Adrenal gland (tissue), 19 donors: ENCODE measurements at regions of chr7 and their contacts with region 1.

Region 1: GRCh38 chr7:130486114-130486958 is 5.5 kb upstream of the MEST start:
- DNase-seq: peak; percentile 78 to 86 (median 85)
- H3K4me3 ChIP-seq: peak overlapping the region in 2 of 4 donors; percentile 62 to 70
- H3K27ac ChIP-seq: peak overlapping the region in 4 of 5 donors; percentile 32 to 90 (median 76)
- H3K4me1 ChIP-seq: peaks cover 7 to 43% of the 10 kb centered on the region in 2 donors
- H3K27me3 ChIP-seq: no peaks in the 10 kb centered on the region
- CTCF ChIP-seq: peak; percentile 68 to 85 (median 77)
- POLR2A ChIP-seq: no peak

Region 2: GRCh38 chr7:130069978-130070860 is 416.1 kb before region 1 on chr7 and contains the start of gene KLHDC10:
- intact Hi-C with region 1: loop called in 1 of 2 experiments (anchors 10 kb)
- DNase-seq: peak; percentile 97 to 100 (median 98)
- H3K4me3 ChIP-seq: peak within 1 kb of the TSS; percentile 7 to 95 (median 80)
- H3K27ac ChIP-seq: peak within 1 kb of the TSS; percentile 78 to 93 (median 85)
- H3K4me1 ChIP-seq: peaks cover 28 to 47% of the 10 kb centered on the region in 2 donors
- H3K27me3 ChIP-seq: no peaks in the 10 kb centered on the region
- CTCF ChIP-seq: no peak
- POLR2A ChIP-seq: peak; percentile 35 to 69
- total RNA-seq, gene KLHDC10: 23.9 to 57.2 (median 33.9) TPM

Region 3: DNA sequence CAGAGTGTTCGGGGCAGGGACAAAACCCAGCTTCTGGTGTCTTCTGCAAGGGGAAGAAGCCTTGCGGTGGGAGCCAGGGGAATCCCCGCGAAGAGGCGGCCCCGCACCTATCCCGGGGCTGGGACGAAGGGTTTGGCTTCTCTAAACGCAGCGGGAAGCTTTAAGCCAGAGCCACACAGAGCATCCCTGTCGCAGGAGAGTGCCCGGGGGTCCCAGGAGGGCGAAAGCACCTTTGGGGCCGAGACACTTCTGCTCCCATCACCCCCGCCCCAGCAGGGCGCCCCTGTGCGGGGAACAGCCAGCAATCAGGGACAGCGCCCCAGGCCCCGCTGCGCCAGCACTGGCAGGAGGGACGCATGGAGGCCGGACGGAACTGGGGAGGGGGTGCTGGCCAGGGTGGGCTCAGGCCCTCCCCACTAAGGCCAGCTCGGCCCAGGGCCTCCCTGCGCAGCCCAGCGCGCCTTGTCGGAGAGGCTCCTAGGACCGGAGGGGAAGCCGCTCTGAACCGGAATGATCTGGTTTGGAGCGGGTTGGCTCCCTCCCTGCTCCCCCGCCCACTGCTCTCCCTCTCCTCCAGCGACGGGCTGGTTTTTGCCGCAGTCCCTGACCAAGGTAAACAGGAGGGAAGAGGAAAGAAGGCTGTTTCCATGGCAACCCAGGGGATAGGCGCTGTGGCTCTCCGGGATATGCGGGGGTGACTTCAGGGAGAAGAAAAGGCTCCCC is 345.0 kb before region 1 on chr7:
- intact Hi-C with region 1: no loop called
- DNase-seq: peak; percentile 65 to 87 (median 78)
- H3K4me3 ChIP-seq: peak overlapping the region; percentile 25 to 76 (median 30)
- H3K27ac ChIP-seq: peak overlapping the region in 2 of 5 donors; percentile 82 to 83
- H3K4me1 ChIP-seq: peaks cover 0 to 7% of the 10 kb centered on the region in 2 donors
- H3K27me3 ChIP-seq: no peaks in the 10 kb centered on the region
- CTCF ChIP-seq: no peak
- POLR2A ChIP-seq: no peak

Region 4: DNA sequence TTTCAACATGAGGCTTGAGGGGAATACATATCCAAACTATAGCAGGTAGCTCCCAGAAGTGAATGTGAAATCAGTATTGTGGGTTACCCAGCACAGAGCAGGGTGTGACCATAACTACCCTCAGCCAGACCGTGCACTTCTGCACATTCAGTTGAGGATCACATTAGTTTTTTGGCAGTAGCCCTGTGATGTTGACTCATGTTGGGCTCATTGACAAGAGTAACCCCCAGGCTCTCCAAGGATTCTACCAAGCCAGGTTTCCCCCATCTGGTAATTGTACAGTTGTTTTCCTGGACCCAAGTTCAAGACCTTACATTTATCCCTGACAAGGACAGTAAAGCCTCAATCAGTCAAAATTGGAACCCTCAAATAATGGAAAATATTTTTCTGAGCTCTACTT is 205.1 kb before region 1 on chr7:
- intact Hi-C with region 1: loop called in 1 of 2 experiments (anchors 5 kb)
- DNase-seq: no peak
- H3K4me3 ChIP-seq: no peak overlapping the region
- H3K27ac ChIP-seq: no peak overlapping the region
- H3K4me1 ChIP-seq: no peaks in the 10 kb centered on the region
- H3K27me3 ChIP-seq: no peaks in the 10 kb centered on the region
- CTCF ChIP-seq: no peak
- POLR2A ChIP-seq: no peak

Region 5: GRCh38 chr7:130352221-130353075 is 133.9 kb before region 1 on chr7:
- intact Hi-C with region 1: no loop called
- DNase-seq: peak in 2 of 7 donors; percentile 32 to 76
- H3K4me3 ChIP-seq: peak overlapping the region in 1 of 4 donors; percentile 21
- H3K27ac ChIP-seq: peak overlapping the region; percentile 28 to 84 (median 57)
- H3K4me1 ChIP-seq: peaks cover 19 to 26% of the 10 kb centered on the region in 2 donors
- H3K27me3 ChIP-seq: no peaks in the 10 kb centered on the region
- CTCF ChIP-seq: no peak
- POLR2A ChIP-seq: no peak

Region 6: GRCh38 chr7:130379921-130380860 is 106.1 kb before region 1 on chr7 and contains the start of gene CPA1:
- intact Hi-C with region 1: loop called in 1 of 2 experiments (anchors 10 kb)
- DNase-seq: peak in 2 of 7 donors; percentile 8 to 45
- H3K4me3 ChIP-seq: no peak within 1 kb of the TSS
- H3K27ac ChIP-seq: peak within 1 kb of the TSS in 1 of 5 donors; percentile 67
- H3K4me1 ChIP-seq: no peaks in the 10 kb centered on the region
- H3K27me3 ChIP-seq: no peaks in the 10 kb centered on the region
- CTCF ChIP-seq: no peak
- POLR2A ChIP-seq: no peak
- total RNA-seq, gene CPA1: 0.14 to 15.0 (median 2.2) TPM in 6 of 9 donors, not detected in the others

Region 7: DNA sequence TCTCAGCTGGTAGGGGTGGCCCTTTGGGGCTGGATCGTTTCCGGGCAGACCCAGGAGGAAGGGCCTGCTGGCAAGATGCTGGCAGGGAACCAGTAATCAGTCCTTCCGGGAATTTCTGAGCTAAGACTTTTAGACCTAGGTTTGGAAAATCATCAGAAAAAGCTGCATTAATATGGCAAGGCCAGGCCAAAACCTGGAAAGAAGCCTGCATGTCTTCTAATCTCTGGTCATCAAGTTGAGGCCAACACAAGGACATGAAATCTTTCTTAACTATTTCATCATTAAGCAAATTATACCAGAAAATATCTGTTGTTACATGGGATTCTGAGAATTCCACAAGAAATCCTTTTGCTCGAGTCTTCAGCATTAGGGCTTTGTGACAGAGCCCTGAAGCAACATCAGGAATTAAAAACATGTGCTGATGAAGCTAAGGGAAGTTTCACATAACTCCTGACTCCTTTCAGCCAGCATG is 86.2 kb before region 1 on chr7:
- intact Hi-C with region 1: no loop called
- DNase-seq: peak in 4 of 7 donors; percentile 14 to 79 (median 54)
- H3K4me3 ChIP-seq: no peak overlapping the region
- H3K27ac ChIP-seq: peak overlapping the region in 3 of 5 donors; percentile 32 to 85 (median 51)
- H3K4me1 ChIP-seq: peaks cover 9 to 26% of the 10 kb centered on the region in 2 donors
- H3K27me3 ChIP-seq: no peaks in the 10 kb centered on the region
- CTCF ChIP-seq: no peak
- POLR2A ChIP-seq: no peak